Natural killer cell (primary cell): ENCODE measurements at regions of chr16 and their contacts with region 1.

Region 1: DNA sequence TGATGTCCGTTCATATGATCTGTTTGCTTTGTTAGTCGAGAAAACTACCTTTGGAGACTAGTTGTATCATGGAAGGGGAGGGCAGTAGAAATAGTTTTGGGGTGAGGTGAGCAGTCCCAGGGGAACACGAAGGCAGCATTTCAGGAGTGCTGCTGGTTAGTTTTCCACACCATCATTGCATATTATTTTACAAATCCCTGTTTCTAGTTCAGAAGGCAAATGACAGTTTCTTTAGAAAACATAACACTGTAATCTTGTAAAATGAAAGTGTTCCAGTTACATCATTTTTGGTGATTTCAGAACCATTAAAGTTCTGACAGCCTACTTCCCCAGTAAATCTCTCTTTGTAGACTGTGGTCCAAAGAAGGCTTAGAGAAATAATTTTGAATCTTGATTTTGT is 25.4 kb downstream of the BANP start:
- DNase-seq: no peak
- ATAC-seq: no peak
- H3K4me3 ChIP-seq: no peak overlapping the region
- H3K4me3 Mint-ChIP-seq: no peak overlapping the region
- H3K27ac ChIP-seq: no peak overlapping the region
- H3K27ac Mint-ChIP-seq: peak overlapping the region in 1 of 2 donors; percentile 43
- H3K4me1 ChIP-seq: peaks cover 35% of the 10 kb centered on the region
- H3K4me1 Mint-ChIP-seq: peaks cover 45 to 50% of the 10 kb centered on the region in 2 donors
- H3K27me3 ChIP-seq: no peaks in the 10 kb centered on the region
- H3K27me3 Mint-ChIP-seq: peaks cover 0 to 4% of the 10 kb centered on the region in 2 donors
- CTCF ChIP-seq: no peak

Region 2: GRCh38 chr16:87963400-87963799 is 13.3 kb before region 1 on chr16:
- intact Hi-C with region 1: loop called (anchors 2 kb)
- DNase-seq: peak; percentile 65 to 75
- ATAC-seq: peak; percentile 86 to 90 (median 87)
- H3K4me3 ChIP-seq: no peak overlapping the region
- H3K4me3 Mint-ChIP-seq: peak overlapping the region; percentile 77
- H3K27ac ChIP-seq: peak overlapping the region; percentile 29
- H3K27ac Mint-ChIP-seq: peak overlapping the region; percentile 94 to 97
- H3K4me1 ChIP-seq: peaks cover 49% of the 10 kb centered on the region
- H3K4me1 Mint-ChIP-seq: peaks cover 68 to 69% of the 10 kb centered on the region in 2 donors
- H3K27me3 ChIP-seq: no peaks in the 10 kb centered on the region
- H3K27me3 Mint-ChIP-seq: no peaks in the 10 kb centered on the region
- CTCF ChIP-seq: no peak

Region 3: DNA sequence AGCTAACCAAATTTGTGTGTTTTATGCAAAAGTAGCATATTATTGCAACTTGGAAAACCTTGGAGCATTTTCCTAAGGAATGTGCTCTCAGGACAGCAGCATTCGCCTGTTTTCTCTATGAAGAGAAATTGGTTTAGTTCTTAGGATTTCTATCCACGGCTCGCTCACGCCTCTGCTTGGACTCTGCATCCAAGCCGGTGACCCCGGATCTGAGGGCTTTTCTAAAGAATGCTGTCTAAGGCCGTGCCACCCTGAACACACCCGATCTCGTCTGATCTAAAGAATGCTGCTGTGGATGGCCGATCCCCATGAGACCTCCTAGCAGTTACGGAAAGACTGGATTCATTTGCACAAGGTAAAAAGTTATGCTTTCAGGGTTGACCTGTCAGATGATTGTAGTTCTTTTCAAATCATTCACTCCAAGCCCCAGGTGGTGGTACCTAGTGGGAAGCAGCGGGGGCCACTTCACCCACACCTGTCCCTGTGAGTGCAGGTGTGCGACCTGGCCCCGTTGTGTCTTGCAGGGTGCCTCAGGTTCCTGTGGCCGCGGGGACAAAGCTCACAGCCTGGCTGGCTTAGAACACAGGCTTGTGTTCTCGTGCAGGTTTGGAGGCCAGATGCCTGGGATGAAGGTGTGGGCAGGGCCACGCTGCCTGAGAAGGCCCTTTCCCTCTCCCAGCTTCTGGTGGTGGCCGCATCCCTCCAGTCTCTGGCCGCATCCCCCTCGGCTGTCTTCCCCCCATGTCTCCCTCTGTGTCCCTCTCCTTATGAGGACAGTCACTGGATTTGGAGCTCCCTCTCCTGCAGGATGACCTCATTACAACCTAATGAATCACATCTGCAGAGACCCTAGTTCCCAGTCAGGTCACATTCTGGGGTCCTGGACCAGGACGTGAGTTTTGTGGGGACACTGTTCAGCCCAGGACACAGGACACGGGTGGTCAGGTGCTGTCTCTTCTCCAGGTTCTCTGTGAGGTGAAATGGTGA is 45.7 kb after region 1 on chr16:
- intact Hi-C with region 1: no loop called
- DNase-seq: no peak
- ATAC-seq: no peak
- H3K4me3 ChIP-seq: no peak overlapping the region
- H3K4me3 Mint-ChIP-seq: no peak overlapping the region
- H3K27ac ChIP-seq: no peak overlapping the region
- H3K27ac Mint-ChIP-seq: peak overlapping the region in 1 of 2 donors; percentile 44
- H3K4me1 ChIP-seq: peaks cover 3% of the 10 kb centered on the region
- H3K4me1 Mint-ChIP-seq: peaks cover 6 to 10% of the 10 kb centered on the region in 2 donors
- H3K27me3 ChIP-seq: no peaks in the 10 kb centered on the region
- H3K27me3 Mint-ChIP-seq: no peaks in the 10 kb centered on the region
- CTCF ChIP-seq: no peak

Region 4: DNA sequence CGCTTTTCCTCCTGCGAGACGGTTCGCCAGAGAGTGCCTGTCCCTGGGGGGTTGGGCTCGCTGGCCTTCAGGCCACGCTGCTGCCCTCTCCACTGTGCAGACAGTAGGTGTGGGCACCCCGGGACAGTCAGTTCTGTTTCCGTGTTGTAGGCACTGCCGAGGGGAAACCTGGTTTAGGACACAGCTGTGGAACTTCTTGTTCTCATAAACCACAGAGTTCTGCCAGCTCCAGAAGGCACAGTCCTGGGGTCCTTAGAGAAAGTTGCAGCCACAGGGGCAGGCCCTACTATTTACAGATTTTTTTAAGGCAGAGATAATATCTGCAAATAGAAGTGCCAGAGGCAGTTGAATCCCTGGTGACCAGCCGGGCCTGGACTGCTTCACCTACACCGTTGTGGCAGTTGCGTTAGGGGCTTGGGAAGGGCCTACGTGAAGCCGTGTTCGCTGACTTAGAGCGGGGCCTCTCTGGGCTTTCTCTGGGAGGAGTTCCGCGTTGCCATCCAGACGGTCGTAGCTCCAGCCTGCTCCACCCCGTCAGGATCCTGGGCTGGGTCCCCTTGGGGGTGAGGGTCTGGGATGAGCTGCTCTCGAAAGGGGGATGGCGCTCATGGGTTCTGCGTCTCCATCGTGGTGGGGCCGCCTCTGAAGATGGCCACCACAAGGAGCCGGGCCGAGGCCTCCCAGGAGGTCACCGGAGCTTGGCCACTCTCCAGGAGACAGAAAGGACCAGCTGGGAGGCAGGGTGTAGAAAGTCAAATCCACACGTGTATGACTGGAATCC is 100.9 kb after region 1 on chr16:
- intact Hi-C with region 1: no loop called
- DNase-seq: no peak
- ATAC-seq: no peak
- H3K4me3 ChIP-seq: no peak overlapping the region
- H3K4me3 Mint-ChIP-seq: no peak overlapping the region
- H3K27ac ChIP-seq: no peak overlapping the region
- H3K27ac Mint-ChIP-seq: no peak overlapping the region
- H3K4me1 ChIP-seq: no peaks in the 10 kb centered on the region
- H3K4me1 Mint-ChIP-seq: no peaks in the 10 kb centered on the region
- H3K27me3 ChIP-seq: no peaks in the 10 kb centered on the region
- H3K27me3 Mint-ChIP-seq: no peaks in the 10 kb centered on the region
- CTCF ChIP-seq: no peak